Esophagus muscularis mucosa (tissue), 4 donors: ENCODE measurements at regions of chr1 and their contacts with region 1.

Region 1: DNA sequence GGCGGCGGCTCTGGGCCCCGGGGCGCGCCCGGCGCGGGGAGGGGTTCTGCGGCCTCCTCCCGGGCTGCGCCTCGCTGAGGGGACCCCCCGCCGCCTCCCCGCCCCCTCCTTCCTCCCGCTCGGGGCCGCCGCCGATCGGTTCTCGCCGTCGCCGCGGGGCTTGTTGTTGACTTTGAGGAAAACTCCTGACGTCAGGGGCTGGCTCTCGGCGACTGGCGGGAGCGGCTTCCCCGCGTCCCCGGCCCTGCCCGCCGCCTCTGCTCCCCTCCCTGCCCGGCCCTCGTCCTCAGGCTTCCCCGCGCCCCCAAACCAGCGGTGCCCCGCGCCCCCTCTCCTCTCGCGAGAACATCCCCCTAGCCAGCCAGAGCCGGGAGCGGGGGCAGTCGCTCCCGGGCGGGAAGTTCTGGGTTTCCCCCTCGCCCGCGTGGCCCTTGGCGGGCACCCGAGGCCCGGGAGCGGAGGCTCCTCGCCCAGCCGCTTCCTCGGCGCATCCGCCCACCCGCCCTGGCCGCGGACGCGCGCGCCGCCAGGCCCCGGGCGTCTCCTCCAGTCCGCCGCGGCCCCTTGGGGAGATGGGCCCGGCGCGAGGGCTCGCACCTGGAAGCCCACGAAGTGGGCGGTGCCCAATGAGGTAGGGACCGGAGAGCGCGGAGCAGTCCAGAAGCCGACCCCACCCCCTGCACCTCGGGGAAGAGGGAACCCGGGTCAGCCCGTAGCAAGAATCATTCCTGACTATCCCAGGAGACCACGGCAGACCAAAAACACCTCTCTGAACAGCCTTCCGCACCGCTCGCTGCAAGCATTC is 611 bp upstream of the AKT3 start:
- DNase-seq: no peak
- H3K4me3 ChIP-seq: peak overlapping the region; percentile 93 to 99 (median 96)
- H3K27ac ChIP-seq: peak overlapping the region; percentile 97 to 99 (median 99)
- H3K4me1 ChIP-seq: peaks cover 3 to 34% (median 30%) of the 10 kb centered on the region in 4 donors
- H3K27me3 ChIP-seq: no peaks in the 10 kb centered on the region
- CTCF ChIP-seq: no peak
- EP300 ChIP-seq: no peak
- POLR2A ChIP-seq: no peak

Region 2: GRCh38 chr1:243255791-243256512 is 594.7 kb before region 1 on chr1 and contains the start of gene SDCCAG8:
- intact Hi-C with region 1: loop called (anchors 10 kb)
- DNase-seq: peak; percentile 98
- H3K4me3 ChIP-seq: peak within 1 kb of the TSS; percentile 79 to 99 (median 90)
- H3K27ac ChIP-seq: peak within 1 kb of the TSS; percentile 91 to 98 (median 97)
- H3K4me1 ChIP-seq: peaks cover 15 to 50% (median 45%) of the 10 kb centered on the region in 4 donors
- H3K27me3 ChIP-seq: no peaks in the 10 kb centered on the region
- CTCF ChIP-seq: no peak
- EP300 ChIP-seq: no peak
- POLR2A ChIP-seq: peak; percentile 71
- total RNA-seq, gene SDCCAG8: 24.5 to 52.7 (median 31.7) TPM

Region 3: GRCh38 chr1:243609698-243610097 is 241.0 kb before region 1 on chr1:
- intact Hi-C with region 1: no loop called
- DNase-seq: no peak
- H3K4me3 ChIP-seq: no peak overlapping the region
- H3K27ac ChIP-seq: no peak overlapping the region
- H3K4me1 ChIP-seq: no peaks in the 10 kb centered on the region
- H3K27me3 ChIP-seq: no peaks in the 10 kb centered on the region
- CTCF ChIP-seq: no peak
- EP300 ChIP-seq: no peak
- POLR2A ChIP-seq: no peak

Region 4: GRCh38 chr1:243708210-243708609 is 142.4 kb before region 1 on chr1:
- intact Hi-C with region 1: loop called (anchors 5 kb)
- DNase-seq: no peak
- H3K4me3 ChIP-seq: no peak overlapping the region
- H3K27ac ChIP-seq: no peak overlapping the region
- H3K4me1 ChIP-seq: peaks cover 0 to 31% (median 22%) of the 10 kb centered on the region in 4 donors
- H3K27me3 ChIP-seq: no peaks in the 10 kb centered on the region
- CTCF ChIP-seq: peak in 2 of 3 experiments; percentile 11 to 19
- EP300 ChIP-seq: no peak
- POLR2A ChIP-seq: no peak

Region 5: DNA sequence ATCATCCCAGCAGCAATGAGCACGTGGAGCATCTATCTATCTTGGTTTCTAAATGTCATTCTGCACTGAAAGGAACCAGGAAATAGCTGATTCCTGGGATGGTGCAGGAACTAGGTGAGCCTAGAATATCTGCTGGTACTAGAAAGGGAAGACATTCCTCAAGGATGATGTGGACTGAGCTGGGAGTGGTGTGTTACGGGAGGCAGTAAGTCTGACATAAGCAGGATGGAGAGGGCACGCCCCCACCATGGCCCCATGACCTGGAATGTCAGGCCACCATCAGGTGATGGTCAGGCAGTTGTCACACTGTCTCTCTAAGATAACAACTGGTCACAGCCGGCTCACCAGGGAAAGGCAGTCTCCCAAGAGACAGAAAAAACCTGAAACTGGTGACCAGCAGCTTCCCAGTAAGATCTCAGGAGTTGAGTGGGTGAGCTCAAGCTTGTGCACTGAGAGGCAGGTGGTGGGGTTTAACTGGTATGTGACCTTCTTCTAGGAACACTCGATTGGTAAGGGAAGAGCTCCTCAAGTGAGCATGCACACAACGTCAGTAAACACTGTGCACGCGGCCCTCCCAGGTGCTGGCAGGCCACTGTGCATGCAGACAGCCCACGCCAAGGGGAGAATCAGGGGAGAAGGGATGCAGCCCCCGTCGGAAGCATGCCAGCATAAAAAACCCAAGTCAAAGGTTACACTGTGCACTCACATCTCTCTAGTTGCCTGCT is 452.4 kb after region 1 on chr1:
- intact Hi-C with region 1: no loop called
- DNase-seq: no peak
- H3K4me3 ChIP-seq: no peak overlapping the region
- H3K27ac ChIP-seq: no peak overlapping the region
- H3K4me1 ChIP-seq: peaks cover 0 to 18% (median 11%) of the 10 kb centered on the region in 4 donors
- H3K27me3 ChIP-seq: no peaks in the 10 kb centered on the region
- CTCF ChIP-seq: no peak
- EP300 ChIP-seq: no peak
- POLR2A ChIP-seq: no peak